ENCODE measurements at regions of chr1 and their contacts with region 1.

Region 1: DNA sequence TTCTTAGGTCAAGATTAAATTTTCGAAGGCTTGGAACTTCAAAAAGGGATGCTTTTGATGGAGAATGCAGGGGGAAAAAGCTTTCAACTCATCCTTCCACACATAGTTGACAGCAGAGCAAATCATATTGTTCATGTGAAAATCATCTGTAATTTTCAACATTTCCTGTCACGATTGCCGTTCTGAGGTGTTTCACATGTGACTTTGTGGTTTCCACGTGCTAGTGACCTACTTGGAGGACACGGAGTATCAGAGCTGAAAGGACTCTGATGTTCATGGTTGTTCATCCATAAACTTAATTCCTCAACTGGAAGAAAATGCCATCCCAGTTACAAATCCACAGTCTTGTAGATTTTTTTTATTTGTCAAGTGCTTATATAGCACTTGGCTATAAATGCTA is 79.1 kb downstream of the ZP4 start:
- DNase-seq: no peak
- ATAC-seq: no peak
- H3K4me3 Mint-ChIP-seq: no peak overlapping the region
- H3K27ac Mint-ChIP-seq: no peak overlapping the region
- H3K4me1 Mint-ChIP-seq: no peaks in the 10 kb centered on the region
- H3K27me3 Mint-ChIP-seq: peaks cover 2% of the 10 kb centered on the region

Region 2: DNA sequence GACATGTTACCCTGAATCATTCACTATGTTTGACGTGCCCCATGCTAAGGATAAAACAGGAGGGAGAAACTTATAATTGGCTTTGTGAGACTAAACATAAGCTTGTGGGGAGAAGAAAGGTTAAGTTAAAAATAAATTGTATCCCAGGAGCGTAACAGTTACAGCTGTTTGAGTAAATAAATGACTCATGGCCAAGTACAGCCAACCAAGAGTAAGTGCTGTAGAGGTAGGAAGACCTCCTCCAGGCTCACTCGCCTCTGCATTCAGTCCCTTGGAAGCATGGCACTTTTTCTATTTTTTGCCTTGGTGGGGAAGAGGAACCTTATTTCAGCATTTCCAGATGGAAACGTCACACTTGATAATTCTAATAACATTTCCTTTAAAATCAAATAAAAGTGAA is 37.4 kb before region 1 on chr1:
- CTCF ChIA-PET with region 1: no interaction called
- POLR2A ChIA-PET with region 1: no interaction called
- intact Hi-C with region 1: loop called in 1 of 2 experiments (anchors 1 kb)
- DNase-seq: no peak
- ATAC-seq: no peak
- H3K4me3 Mint-ChIP-seq: no peak overlapping the region
- H3K27ac Mint-ChIP-seq: no peak overlapping the region
- H3K4me1 Mint-ChIP-seq: no peaks in the 10 kb centered on the region
- H3K27me3 Mint-ChIP-seq: no peaks in the 10 kb centered on the region

Measured in activated CD4-positive, alpha-beta T cell treated with anti-CD3 and anti-CD28 coated beads for 36 hours (primary cell).